Activated CD4-positive, alpha-beta T cell treated with anti-CD3 and anti-CD28 coated beads for 36 hours (primary cell): ENCODE measurements at regions of chr1 and their contacts with region 1.

Region 1: DNA sequence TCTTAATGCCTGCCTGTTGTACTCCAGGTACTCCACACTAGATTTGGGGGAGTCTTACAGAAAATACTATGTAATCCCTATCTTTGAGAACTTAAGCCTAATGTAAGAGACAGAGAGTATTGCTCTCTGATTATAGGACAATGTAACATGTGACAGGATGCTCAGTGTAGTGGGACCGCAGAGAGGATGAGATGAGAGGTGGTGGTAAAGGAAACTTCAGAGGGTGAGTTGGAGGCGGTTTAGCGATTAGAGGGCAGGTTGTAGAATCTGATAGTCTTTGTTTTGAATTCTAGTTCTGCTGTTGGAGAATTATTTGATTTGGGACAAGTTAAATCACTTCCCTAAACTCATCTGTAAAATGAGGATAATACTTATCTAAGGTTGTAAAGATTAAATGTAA is 5.4 kb downstream of the SOAT1 start:
- DNase-seq: peak; percentile 74
- ATAC-seq: peak; percentile 92
- H3K4me3 Mint-ChIP-seq: peak overlapping the region; percentile 22
- H3K27ac Mint-ChIP-seq: peak overlapping the region; percentile 78
- H3K4me1 Mint-ChIP-seq: peaks cover 73% of the 10 kb centered on the region
- H3K27me3 Mint-ChIP-seq: no peaks in the 10 kb centered on the region

Region 2: GRCh38 chr1:179034720-179035119 is 264.2 kb before region 1 on chr1:
- CTCF ChIA-PET with region 1: no interaction called
- POLR2A ChIA-PET with region 1: interaction called, 8 read pairs
- intact Hi-C with region 1: loop called in 1 of 2 experiments (anchors 1 kb)
- DNase-seq: no peak
- ATAC-seq: peak; percentile 80
- H3K4me3 Mint-ChIP-seq: no peak overlapping the region
- H3K27ac Mint-ChIP-seq: peak overlapping the region; percentile 84
- H3K4me1 Mint-ChIP-seq: peaks cover 85% of the 10 kb centered on the region
- H3K27me3 Mint-ChIP-seq: no peaks in the 10 kb centered on the region

Region 3: DNA sequence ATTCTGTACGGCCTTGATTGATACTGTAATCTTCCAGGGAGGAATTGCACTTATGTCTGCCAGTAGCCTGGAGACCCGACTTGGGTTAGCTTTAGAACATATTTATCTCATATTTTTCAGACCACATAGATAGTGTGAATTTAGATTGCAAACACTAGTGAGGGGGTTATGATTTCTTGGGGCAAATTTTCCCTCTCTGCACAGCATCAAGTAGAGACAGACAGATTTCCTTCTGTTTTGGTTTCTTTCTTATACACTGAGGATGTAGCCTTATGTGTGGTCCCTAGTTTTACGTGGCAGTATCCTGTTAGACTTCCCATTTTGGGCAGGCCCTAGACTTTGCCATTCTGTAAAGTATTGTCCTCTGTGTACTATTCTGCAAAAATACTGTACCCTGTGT is 23.6 kb after region 1 on chr1:
- CTCF ChIA-PET with region 1: no interaction called
- POLR2A ChIA-PET with region 1: no interaction called
- intact Hi-C with region 1: loop called in 1 of 2 experiments (anchors 2 kb)
- DNase-seq: no peak
- ATAC-seq: no peak
- H3K4me3 Mint-ChIP-seq: no peak overlapping the region
- H3K27ac Mint-ChIP-seq: no peak overlapping the region
- H3K4me1 Mint-ChIP-seq: peaks cover 28% of the 10 kb centered on the region
- H3K27me3 Mint-ChIP-seq: no peaks in the 10 kb centered on the region

Region 4: DNA sequence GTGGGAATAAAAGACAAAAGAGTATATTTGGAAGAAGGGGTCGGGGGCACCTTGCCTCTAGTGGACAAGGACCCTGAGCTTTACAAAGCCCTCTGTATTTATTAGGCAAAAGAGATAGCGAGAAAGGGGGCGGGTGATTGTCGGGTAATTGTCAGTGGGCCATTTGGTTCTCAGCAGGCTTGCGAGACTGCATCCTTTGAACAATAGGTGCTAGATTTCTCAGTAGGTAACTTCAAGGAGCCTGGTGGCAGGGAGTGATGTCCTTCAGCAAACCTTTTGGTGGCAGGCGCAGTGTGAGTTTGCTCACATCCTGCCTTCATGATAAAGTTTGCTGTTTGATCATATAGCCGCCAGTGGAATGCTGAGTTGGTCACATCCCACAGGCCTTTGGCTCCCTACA is 138.2 kb after region 1 on chr1:
- CTCF ChIA-PET with region 1: no interaction called
- POLR2A ChIA-PET with region 1: no interaction called
- intact Hi-C with region 1: no loop called
- DNase-seq: no peak
- ATAC-seq: no peak
- H3K4me3 Mint-ChIP-seq: no peak overlapping the region
- H3K27ac Mint-ChIP-seq: no peak overlapping the region
- H3K4me1 Mint-ChIP-seq: no peaks in the 10 kb centered on the region
- H3K27me3 Mint-ChIP-seq: peaks cover 14% of the 10 kb centered on the region